IMR-90 (cell line): ENCODE measurements at regions of chr17 and their contacts with region 1.

Region 1: DNA sequence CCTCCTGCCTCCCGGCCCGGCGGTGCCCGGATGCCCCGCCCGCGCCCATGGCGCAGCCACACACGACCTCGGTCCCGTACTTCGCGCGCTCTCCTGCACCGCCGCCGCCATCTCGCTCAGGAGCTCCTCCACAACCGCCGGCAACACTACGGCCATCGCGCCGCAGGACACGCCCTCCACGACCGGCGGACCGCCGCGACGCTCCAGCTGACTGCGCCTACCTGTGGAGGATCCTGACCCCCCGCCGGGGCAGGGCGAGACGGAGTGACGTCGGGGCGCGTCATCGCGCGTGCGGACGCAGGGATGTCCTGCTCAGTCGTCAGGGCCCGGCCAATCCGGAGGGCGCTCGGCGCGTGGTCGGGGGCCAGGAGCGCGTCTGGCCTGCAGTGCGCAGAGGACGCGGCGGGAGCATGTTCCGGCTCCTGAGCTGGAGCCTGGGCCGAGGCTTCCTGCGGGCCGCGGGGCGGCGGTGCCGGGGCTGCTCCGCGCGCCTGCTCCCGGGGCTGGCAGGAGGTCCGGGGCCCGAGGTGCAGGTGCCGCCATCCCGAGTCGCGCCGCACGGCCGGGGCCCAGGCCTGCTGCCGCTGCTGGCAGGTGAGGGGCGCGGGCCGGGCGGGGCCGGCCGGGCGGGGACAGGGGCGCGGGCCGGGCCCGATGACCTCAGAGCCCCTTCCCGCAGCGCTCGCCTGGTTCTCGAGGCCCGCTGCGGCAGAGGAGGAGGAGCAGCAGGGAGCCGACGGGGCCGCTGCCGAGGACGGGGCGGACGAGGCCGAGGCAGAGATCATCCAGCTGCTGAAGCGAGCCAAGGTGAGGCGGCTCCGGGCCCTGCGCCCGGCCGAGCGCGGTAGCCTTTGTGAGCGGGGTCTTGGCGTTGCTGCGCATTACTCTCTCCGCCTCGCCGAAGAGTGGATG is at the starts of genes TTC19 and ZSWIM7:
- DNase-seq: peak; percentile 94
- ATAC-seq: peak; percentile 95
- H3K4me3 ChIP-seq: peak within 1 kb of the TSS; percentile 72
- H3K27ac ChIP-seq: peak within 1 kb of the TSS; percentile 96
- H3K4me1 ChIP-seq: peaks cover 6% of the 10 kb centered on the region; the same call in 1 of the 2 replicates
- H3K27me3 ChIP-seq: no peaks in the 10 kb centered on the region
- CTCF ChIP-seq: no peak
- POLR2A ChIP-seq: peak; percentile 99
- RAD21 ChIP-seq: no peak
- total RNA-seq, gene TTC19: 12.9 and 19.2 TPM in 2 replicates
- total RNA-seq, gene ZSWIM7: 6.8 and 7.2 TPM in 2 replicates

Region 2: DNA sequence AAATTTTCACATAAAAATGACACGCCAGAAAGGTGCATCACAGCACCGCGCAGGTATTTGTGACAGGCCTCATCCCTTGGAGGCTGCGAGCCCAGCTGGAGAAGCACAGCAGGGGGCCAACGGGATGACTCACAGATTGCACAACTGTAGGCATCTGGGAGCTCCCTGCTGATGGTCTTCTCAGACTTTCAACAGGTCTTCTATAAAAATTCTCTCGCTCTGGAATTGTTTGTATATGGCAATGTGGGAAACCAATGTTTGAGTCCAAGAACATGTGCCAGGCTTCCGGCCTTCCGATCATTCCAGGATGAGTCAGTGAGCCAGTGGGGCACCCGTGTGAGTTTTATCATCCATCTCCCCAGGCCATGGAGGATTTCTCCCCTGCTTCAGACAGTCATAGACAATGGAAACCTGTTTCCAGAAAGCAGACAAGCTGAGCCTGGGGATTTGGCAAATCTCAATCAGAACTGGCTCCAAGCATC is 78.9 kb before region 1 on chr17:
- CTCF ChIA-PET with region 1: interaction called, 5 read pairs
- POLR2A ChIA-PET with region 1: no interaction called
- dilution Hi-C with region 1: no loop called
- in situ Hi-C with region 1: no loop called
- intact Hi-C with region 1: loop called (anchors 2 kb)
- DNase-seq: peak; percentile 97
- ATAC-seq: peak; percentile 85
- H3K4me3 ChIP-seq: no peak overlapping the region
- H3K27ac ChIP-seq: peak overlapping the region; percentile 62
- H3K4me1 ChIP-seq: peaks cover 4% of the 10 kb centered on the region
- H3K27me3 ChIP-seq: no peaks in the 10 kb centered on the region
- CTCF ChIP-seq: no peak
- POLR2A ChIP-seq: no peak
- RAD21 ChIP-seq: 0 out of 2 replicates have a peak, but pooled peaks have one; percentile 1

Region 3: DNA sequence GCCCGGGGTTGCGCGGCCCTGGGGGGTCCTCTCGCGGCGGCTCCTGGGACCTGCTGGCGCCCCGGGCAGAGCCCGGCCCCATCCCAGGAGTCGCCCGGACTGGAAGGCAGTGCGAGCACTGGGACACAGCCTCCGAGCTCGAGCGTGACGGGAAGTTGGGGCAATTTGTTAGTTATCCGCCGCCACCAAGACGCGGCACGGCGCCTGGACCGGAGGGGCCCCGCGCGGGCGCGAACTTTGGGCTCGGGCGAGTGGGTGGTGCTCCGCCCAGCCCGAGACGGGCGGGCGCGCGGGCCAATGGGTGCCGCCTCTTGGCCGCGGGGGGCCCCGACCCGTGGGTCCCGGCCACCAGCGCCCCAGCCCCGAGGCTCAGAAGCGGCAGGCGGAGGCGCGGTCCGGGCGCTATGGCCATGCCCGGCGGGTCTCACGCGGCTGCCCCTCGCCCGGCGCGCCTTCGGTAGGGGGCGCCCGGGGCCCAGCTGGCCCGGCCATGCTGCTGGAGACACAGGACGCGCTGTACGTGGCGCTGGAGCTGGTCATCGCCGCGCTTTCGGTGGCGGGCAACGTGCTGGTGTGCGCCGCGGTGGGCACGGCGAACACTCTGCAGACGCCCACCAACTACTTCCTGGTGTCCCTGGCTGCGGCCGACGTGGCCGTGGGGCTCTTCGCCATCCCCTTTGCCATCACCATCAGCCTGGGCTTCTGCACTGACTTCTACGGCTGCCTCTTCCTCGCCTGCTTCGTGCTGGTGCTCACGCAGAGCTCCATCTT is 54.8 kb before region 1 on chr17 and contains the start of gene ADORA2B:
- CTCF ChIA-PET with region 1: interaction called, 8 read pairs
- POLR2A ChIA-PET with region 1: no interaction called
- dilution Hi-C with region 1: no loop called
- in situ Hi-C with region 1: no loop called
- intact Hi-C with region 1: loop called (anchors 1 kb)
- DNase-seq: peak; percentile 71
- ATAC-seq: peak; percentile 83
- H3K4me3 ChIP-seq: peak within 1 kb of the TSS; percentile 73
- H3K27ac ChIP-seq: peak within 1 kb of the TSS; percentile 81
- H3K4me1 ChIP-seq: peaks cover 20% of the 10 kb centered on the region
- H3K27me3 ChIP-seq: no peaks in the 10 kb centered on the region
- CTCF ChIP-seq: peak; percentile 70
- POLR2A ChIP-seq: peak; percentile 41; the same call in 1 of the 2 replicates
- RAD21 ChIP-seq: peak; percentile 57
- total RNA-seq, gene ADORA2B: 5.2 and 5.8 TPM in 2 replicates